ENCODE measurements at regions of chr1 and their contacts with region 1.

Region 1: DNA sequence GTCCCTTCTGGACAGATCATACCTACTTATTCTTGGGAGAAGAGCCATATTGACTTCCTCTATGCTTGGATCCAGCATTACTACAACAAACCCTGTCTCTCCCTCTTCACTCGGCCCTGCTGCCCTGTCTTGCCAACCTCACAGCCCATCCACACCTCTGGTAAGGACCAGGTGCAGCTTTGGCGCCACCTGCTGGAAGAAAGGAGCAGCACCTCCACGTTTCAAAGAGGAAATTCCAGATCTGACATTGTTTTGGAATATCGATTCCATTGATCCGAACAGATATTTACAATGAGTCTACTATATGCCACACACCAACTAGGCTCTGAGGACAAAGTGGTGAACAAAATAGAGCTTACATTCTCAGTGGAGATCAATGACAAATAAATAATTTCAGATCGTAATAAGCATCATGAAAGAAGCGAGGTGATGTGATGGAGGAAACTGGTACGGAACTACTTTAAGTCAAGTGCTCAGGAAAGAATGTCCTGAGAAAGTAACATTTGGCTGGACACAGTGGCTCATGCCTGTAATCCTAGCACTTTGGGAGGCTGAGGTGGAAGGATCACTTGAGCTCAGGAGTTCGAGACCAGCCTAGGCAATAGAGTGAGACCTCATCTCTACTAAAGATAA is 18.7 kb downstream of the MFSD2A start:
- DNase-seq: peak; percentile 77
- CTCF ChIP-seq: peak; percentile 92

Region 2: GRCh38 chr1:39116868-39117728 is 856.5 kb before region 1 on chr1:
- in situ Hi-C with region 1: no loop called
- DNase-seq: no peak
- CTCF ChIP-seq: no peak

Region 3: GRCh38 chr1:39816415-39817090 is 157.1 kb before region 1 on chr1:
- in situ Hi-C with region 1: loop called (anchors 10 kb)
- DNase-seq: peak; percentile 78
- CTCF ChIP-seq: peak; percentile 77

Region 4: GRCh38 chr1:40197656-40198055 is 224.0 kb after region 1 on chr1:
- in situ Hi-C with region 1: no loop called
- DNase-seq: no peak
- CTCF ChIP-seq: peak; percentile 22

Measured in GM13977 (cell line).